ENCODE measurements at regions of chr10 and their contacts with region 1.

Region 1: DNA sequence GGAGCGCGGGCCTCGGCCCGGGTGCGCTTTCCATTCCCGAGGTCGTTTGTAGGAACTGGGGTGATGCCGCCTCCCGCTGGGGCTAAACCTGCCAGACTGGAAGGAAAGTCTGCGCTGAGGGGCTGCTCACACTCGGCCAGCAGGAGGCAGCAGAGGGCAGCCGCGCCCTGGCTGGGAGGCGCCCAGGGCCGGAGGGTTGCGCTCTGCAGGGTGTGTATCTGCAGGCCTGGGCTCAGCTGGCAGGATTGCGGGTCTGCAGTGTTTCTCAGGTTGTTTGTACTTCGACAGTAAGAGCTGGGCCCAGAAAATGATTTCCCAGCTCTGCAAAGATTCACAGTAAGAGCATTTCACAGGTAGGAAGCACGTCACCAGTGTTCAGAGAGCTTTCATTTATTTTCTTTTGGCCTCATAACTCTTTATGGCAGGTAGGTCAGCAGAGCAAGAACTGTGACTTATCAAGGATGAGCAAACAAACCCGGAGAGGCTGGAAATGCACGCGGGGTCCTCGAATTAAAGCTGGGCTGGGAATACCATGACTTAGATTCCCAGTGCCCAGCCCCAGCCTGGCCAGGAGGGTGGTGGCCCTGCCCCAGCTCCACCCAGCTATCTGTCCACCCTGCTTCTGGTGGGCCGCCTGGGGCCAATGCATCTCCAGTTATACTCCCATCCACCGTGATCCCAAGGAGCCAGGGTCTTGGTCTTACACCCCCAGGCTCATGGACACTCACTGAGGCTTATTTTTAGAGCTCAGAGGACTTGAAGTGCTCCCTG is 15.2 kb upstream of the PPP2R2D start:
- DNase-seq: peak; percentile 91

Region 2: DNA sequence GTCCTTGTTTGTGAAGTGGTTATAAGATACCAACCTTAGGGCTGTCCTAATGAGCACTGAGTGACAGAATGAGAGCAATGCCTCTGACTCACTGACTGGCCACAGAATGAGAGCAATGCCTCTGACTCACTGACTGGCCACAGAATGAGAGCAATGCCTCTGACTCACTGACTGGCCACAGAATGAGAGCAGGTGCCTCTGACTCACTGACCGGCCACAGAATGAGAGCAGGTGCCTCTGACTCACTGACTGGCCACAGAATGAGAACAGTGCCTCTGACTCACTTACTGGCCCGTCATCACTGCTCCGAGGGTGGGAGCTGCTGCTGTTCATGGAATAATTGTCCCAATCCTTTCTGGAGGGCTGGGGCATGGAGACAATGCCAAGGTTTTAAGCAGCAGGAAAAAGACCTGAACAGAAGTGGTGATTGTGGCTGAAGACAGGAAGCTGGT is 250.0 kb before region 1 on chr10:
- CTCF ChIA-PET with region 1: no interaction called
- POLR2A ChIA-PET with region 1: no interaction called
- DNase-seq: no peak

Region 3: DNA sequence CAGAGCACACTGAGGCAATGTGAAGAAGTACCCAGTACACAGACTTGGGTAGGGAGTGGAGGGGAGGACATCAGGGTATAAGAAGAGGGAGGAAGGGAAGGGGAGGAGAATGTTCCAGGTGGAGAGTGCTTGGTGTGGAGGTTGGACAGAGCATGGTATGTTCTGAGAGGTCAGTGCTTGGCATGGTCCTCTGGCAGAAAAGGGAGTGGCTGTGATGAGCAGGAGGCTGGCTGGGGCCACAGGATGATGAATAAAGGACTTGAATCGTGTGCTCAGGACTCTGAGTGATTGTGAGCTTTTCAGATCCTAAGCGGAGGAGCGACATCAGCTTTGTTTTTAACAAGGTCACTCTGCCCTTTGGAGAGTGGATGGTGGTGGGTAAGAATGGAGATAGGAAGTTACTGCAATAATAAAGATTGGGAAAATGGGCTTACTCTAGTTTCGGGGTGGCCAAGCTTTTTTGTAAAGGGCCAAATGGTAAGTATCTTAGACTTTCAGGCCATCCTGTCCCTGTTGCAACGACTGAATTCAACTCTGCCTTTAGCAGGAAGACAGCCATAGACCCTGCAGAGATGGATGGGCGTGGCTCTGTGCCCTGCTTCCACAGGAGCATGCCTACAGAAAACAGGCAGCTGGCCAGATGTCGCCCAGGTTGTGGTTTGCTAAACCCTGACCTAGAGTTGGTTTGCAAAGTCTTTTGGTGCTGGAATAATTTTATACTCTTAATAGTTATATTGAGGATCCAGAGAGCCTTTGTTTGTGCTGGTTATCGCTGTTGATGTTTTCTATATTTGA is 23.6 kb after region 1 on chr10:
- CTCF ChIA-PET with region 1: no interaction called
- POLR2A ChIA-PET with region 1: no interaction called
- DNase-seq: no peak

Region 4: GRCh38 chr10:131943021-131943814 is 57.6 kb after region 1 on chr10:
- CTCF ChIA-PET with region 1: interaction called, 16 read pairs
- POLR2A ChIA-PET with region 1: no interaction called
- DNase-seq: peak; percentile 79